A673 (cell line): ENCODE measurements at regions of chr5 and their contacts with region 1.

Region 1: GRCh38 chr5:18465833-18466591 is 831.8 kb downstream of the TAF11L14 start:
- DNase-seq: peak; percentile 77
- H3K4me3 ChIP-seq: no peak overlapping the region
- H3K27ac ChIP-seq: no peak overlapping the region
- H3K4me1 ChIP-seq: no peaks in the 10 kb centered on the region
- H3K27me3 ChIP-seq: no peaks in the 10 kb centered on the region
- CTCF ChIP-seq: peak; percentile 86

Region 2: GRCh38 chr5:17204133-17204489 is 1261.9 kb before region 1 on chr5:
- CTCF ChIA-PET with region 1: no interaction called
- POLR2A ChIA-PET with region 1: no interaction called
- intact Hi-C with region 1: no loop called
- DNase-seq: no peak
- H3K4me3 ChIP-seq: no peak overlapping the region
- H3K27ac ChIP-seq: peak overlapping the region; percentile 11
- H3K4me1 ChIP-seq: peaks cover 23% of the 10 kb centered on the region
- H3K27me3 ChIP-seq: no peaks in the 10 kb centered on the region
- CTCF ChIP-seq: no peak

Region 3: GRCh38 chr5:18491349-18491748 is 25.3 kb after region 1 on chr5:
- CTCF ChIA-PET with region 1: no interaction called
- POLR2A ChIA-PET with region 1: no interaction called
- intact Hi-C with region 1: no loop called
- DNase-seq: no peak
- H3K4me3 ChIP-seq: no peak overlapping the region
- H3K27ac ChIP-seq: no peak overlapping the region
- H3K4me1 ChIP-seq: peaks cover 7% of the 10 kb centered on the region
- H3K27me3 ChIP-seq: no peaks in the 10 kb centered on the region
- CTCF ChIP-seq: no peak

Region 4: DNA sequence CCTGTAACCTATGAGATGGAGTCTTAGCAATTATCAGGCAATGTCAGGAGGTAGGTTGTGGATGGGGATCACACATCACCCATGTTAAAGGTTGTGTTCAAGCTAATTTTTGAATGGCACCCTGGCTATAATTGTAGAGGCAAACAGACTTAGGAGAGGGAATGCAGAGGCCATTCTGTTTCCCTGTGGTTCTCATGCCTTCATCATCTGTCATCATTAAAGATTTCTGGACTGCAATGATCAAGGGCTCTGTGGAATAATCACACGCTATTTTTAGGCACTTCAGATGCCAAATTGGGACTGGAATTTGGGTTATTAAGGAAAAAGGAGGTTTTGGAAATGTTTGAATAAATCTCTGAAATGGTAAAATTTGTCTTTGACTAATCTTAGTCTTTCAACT is 233.7 kb after region 1 on chr5:
- CTCF ChIA-PET with region 1: interaction called, 6 read pairs
- POLR2A ChIA-PET with region 1: no interaction called
- intact Hi-C with region 1: loop called (anchors 1 kb)
- DNase-seq: no peak
- H3K4me3 ChIP-seq: no peak overlapping the region
- H3K27ac ChIP-seq: no peak overlapping the region
- H3K4me1 ChIP-seq: no peaks in the 10 kb centered on the region
- H3K27me3 ChIP-seq: no peaks in the 10 kb centered on the region
- CTCF ChIP-seq: no peak

Region 5: GRCh38 chr5:19608444-19609002 is 1142.5 kb after region 1 on chr5:
- CTCF ChIA-PET with region 1: no interaction called
- POLR2A ChIA-PET with region 1: no interaction called
- intact Hi-C with region 1: loop called (anchors 2 kb)
- DNase-seq: peak; percentile 9
- H3K4me3 ChIP-seq: no peak overlapping the region
- H3K27ac ChIP-seq: no peak overlapping the region
- H3K4me1 ChIP-seq: no peaks in the 10 kb centered on the region
- H3K27me3 ChIP-seq: no peaks in the 10 kb centered on the region
- CTCF ChIP-seq: peak; percentile 33; the same call in 1 of the 2 replicates